Activated B cell treated with CpG ODN at 0.5 μM for 24 hours (primary cell): ENCODE measurements at regions of chr11 and their contacts with region 1.

Region 1: GRCh38 chr11:118010738-118011461 is 24.7 kb downstream of the IL10RA start:
- DNase-seq: peak; percentile 77
- ATAC-seq: peak; percentile 67
- H3K4me3 Mint-ChIP-seq: peak overlapping the region; percentile 66
- H3K27ac Mint-ChIP-seq: peak overlapping the region; percentile 98
- H3K4me1 Mint-ChIP-seq: peaks cover 100% of the 10 kb centered on the region
- H3K27me3 Mint-ChIP-seq: no peaks in the 10 kb centered on the region
- CTCF ChIP-seq: no peak

Region 2: DNA sequence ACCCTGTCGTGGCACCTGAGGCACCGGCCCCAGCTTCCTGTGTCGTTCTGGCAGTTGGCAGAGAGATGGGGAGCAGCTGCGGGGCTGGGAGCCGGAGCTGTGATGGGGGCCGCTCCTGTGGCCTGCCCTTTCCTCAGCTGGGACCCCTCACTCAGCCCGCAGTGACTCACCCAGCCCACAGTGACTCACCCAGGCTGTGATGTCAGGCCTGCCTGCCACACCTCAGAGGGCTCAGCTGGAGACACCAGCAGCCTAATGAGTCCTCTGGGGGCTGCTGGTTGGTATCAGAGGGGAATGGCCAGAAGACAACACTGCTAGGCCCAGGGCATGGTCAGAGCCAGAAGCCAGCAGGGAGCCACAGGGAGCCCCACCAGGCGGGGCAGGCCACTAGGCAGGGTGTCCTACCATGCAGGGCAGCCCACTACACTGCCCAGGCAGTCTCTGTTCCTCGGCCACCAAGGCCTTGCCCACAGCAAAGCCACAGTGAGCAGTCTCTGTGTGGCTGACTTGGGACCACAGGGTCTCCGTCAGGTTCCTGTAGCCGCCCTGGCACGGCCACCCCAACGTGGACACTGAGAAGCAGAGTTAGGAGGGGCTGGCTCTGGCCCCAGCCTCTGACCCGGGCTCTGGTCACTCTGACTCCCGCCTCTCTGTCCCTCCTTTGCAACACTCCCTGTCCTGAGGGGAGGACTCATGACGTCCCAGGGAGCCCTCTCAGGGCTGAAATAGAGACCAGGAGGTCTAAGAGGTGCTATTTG is 182.1 kb before region 1 on chr11:
- CTCF ChIA-PET with region 1: no interaction called
- POLR2A ChIA-PET with region 1: interaction called, 12 read pairs
- intact Hi-C with region 1: no loop called
- DNase-seq: peak; percentile 79
- ATAC-seq: peak; percentile 89
- H3K4me3 Mint-ChIP-seq: peak overlapping the region; percentile 44
- H3K27ac Mint-ChIP-seq: peak overlapping the region; percentile 80
- H3K4me1 Mint-ChIP-seq: peaks cover 51% of the 10 kb centered on the region
- H3K27me3 Mint-ChIP-seq: peaks cover 23% of the 10 kb centered on the region
- CTCF ChIP-seq: no peak

Region 3: DNA sequence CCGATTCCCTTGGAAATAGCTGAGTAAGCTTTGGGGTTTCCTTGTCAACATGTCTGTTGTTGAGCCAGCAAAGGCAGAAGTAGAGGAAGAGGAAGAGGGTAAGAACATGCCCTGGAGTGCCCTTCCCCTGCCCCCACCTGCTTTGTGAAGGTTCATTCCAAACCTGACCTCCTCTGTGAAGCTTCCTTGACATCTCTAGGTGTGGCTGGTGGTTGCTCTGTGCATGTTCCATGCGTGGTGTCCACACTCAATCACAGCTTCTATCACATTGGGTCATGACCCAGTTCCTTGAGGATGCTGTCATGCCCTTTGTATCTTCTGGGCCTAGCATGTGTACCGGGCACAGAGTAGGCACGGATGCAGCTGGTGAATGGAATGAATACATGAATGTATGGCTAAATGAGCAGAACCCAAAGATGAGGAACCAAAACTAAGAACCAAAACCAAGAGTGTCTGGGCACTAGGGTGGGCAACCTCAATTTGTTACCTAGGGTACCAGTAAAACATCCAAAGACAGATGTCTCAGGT is 110.7 kb before region 1 on chr11:
- CTCF ChIA-PET with region 1: no interaction called
- POLR2A ChIA-PET with region 1: interaction called, 3 read pairs
- intact Hi-C with region 1: loop called (anchors 1 kb)
- DNase-seq: peak; percentile 40
- ATAC-seq: peak; percentile 83
- H3K4me3 Mint-ChIP-seq: peak overlapping the region; percentile 9
- H3K27ac Mint-ChIP-seq: peak overlapping the region; percentile 87
- H3K4me1 Mint-ChIP-seq: peaks cover 26% of the 10 kb centered on the region
- H3K27me3 Mint-ChIP-seq: no peaks in the 10 kb centered on the region
- CTCF ChIP-seq: no peak

Region 4: DNA sequence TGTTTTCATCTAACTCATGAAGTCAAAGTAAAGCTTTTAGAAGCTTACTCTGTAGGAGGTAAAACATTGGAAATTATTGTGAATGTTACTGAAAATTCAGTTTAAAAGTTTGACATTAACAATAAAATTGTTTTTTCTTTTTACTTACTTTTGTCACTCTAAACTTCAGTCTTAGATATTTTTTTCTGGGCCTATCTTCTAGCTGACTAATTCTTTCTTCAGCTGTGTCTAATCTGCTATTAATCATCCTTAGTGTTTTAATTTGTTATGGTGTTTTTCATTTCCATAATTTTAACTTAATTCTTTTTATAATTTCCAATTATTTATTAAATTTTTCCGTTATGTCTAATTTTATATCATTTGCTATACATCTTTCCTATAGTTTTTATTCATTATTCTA is 10.2 kb after region 1 on chr11:
- CTCF ChIA-PET with region 1: interaction called, 3 read pairs
- POLR2A ChIA-PET with region 1: interaction called, 35 read pairs
- intact Hi-C with region 1: loop called (anchors 1 kb)
- DNase-seq: no peak
- ATAC-seq: no peak
- H3K4me3 Mint-ChIP-seq: no peak overlapping the region
- H3K27ac Mint-ChIP-seq: no peak overlapping the region
- H3K4me1 Mint-ChIP-seq: peaks cover 22% of the 10 kb centered on the region
- H3K27me3 Mint-ChIP-seq: no peaks in the 10 kb centered on the region
- CTCF ChIP-seq: no peak

Region 5: DNA sequence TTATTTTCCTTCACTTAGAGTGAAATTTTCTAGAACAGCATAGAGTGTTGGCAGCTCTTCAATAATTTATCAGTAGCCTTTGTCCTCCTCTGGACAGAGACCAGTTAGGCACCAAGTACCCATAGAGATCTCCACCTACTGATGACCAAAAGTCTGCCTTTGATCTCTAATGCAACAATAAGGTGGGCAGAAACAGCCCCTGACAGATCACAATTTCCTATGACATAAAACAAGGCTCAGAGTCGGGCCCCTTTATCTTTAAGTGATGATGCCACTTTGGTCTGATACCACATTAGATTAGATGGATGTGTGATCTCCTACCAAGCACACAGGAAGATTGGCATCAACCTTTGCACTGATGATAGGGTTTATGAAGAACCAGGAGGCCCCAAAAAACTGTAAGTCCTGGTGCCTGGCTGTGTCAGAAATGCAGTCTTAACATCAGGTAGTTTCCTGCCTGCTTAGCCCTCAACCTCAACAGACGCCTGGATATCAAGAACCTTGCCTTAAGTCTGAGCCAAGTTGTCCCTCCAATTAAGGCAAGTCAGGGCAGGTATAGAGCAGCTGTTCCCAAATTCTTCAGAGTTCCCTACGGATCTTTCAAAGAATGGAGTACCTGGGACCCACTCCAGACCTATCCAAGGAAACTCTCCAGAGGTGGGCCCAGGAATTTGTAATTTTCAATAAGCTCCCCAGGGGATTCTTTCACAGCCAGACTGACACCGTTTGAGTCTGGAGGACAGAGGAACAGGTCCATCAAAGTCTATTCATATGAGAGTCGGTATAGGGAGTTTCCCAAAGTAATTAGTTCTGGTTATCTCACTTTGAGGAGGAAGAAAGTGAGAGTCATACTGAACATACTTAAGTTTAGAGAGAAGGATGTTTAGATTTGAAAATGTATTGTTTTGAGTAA is 35.4 kb after region 1 on chr11:
- CTCF ChIA-PET with region 1: interaction called, 42 read pairs
- POLR2A ChIA-PET with region 1: interaction called, 114 read pairs
- intact Hi-C with region 1: loop called (anchors 1 kb)
- DNase-seq: no peak
- ATAC-seq: peak; percentile 53
- H3K4me3 Mint-ChIP-seq: no peak overlapping the region
- H3K27ac Mint-ChIP-seq: peak overlapping the region; percentile 56
- H3K4me1 Mint-ChIP-seq: peaks cover 40% of the 10 kb centered on the region
- H3K27me3 Mint-ChIP-seq: no peaks in the 10 kb centered on the region
- CTCF ChIP-seq: no peak